ENCODE measurements at regions of chr16 and their contacts with region 1.

Region 1: GRCh38 chr16:21300309-21301167 is 22.4 kb upstream of the CRYM start:
- DNase-seq: peak; percentile 86
- ATAC-seq: peak; percentile 95 to 96
- H3K4me3 ChIP-seq: peak overlapping the region; percentile 71
- H3K27ac ChIP-seq: peak overlapping the region; percentile 76
- H3K4me1 ChIP-seq: peaks cover 8% of the 10 kb centered on the region
- H3K27me3 ChIP-seq: no peaks in the 10 kb centered on the region
- CTCF ChIP-seq: peak; percentile 75

Region 2: GRCh38 chr16:21179126-21179982 is 121.2 kb before region 1 on chr16:
- intact Hi-C with region 1: loop called (anchors 10 kb)
- DNase-seq: no peak
- ATAC-seq: no peak
- H3K4me3 ChIP-seq: no peak overlapping the region
- H3K27ac ChIP-seq: no peak overlapping the region
- H3K4me1 ChIP-seq: no peaks in the 10 kb centered on the region
- H3K27me3 ChIP-seq: no peaks in the 10 kb centered on the region
- CTCF ChIP-seq: no peak

Region 3: DNA sequence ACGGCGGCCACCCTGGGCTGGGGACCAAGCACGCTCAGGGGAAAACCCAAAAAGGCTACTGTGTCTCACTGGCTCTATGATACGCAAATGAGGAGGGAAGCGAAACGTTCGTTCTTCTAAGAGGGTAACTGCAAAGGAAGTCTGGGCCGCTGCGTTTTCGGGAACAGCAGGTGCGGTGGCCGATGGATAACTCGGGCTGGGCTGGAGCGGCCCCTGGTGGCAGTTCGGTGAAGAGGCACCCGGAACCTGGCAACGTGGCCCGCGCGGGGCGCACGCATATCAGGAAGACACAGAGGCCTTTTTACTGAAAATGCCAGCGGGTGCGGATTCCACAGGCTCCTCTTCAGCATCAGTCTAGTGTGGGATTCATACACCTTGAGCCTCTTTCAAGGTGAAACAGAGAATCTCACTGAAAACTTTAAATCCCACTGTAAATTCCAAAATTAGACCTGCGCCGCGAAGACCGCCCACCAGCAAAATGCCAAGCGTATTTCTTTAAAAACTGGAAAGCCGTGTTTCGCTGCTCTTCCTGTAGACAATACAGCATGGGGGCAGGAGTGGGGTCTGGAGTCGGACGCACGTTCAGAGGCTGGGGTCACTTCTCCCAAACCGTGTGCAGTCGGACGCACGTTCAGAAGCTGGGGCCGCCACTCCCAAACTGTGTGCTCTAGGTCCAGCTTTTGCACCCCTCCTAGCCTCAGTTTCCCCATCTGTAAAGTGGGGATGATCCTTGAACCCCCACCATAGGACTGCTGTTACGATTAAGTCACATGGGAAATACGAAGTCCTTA is 254.5 kb after region 1 on chr16:
- intact Hi-C with region 1: no loop called
- DNase-seq: peak; percentile 94
- ATAC-seq: peak; percentile 94 to 95
- H3K4me3 ChIP-seq: peak overlapping the region; percentile 22
- H3K27ac ChIP-seq: no peak overlapping the region
- H3K4me1 ChIP-seq: peaks cover 11% of the 10 kb centered on the region
- H3K27me3 ChIP-seq: peaks cover 15% of the 10 kb centered on the region
- CTCF ChIP-seq: peak; percentile 100

Measured in lower lobe of right lung (tissue), 2 donors.